PC-9 (cell line): ENCODE measurements at regions of chr5 and their contacts with region 1.

Region 1: GRCh38 chr5:139381837-139382361 is 1.2 kb downstream of the SLC23A1 start:
- DNase-seq: no peak
- H3K4me3 ChIP-seq: no peak overlapping the region
- H3K27ac ChIP-seq: no peak overlapping the region
- H3K4me1 ChIP-seq: peaks cover 49% of the 10 kb centered on the region
- H3K27me3 ChIP-seq: no peaks in the 10 kb centered on the region
- CTCF ChIP-seq: no peak

Region 2: DNA sequence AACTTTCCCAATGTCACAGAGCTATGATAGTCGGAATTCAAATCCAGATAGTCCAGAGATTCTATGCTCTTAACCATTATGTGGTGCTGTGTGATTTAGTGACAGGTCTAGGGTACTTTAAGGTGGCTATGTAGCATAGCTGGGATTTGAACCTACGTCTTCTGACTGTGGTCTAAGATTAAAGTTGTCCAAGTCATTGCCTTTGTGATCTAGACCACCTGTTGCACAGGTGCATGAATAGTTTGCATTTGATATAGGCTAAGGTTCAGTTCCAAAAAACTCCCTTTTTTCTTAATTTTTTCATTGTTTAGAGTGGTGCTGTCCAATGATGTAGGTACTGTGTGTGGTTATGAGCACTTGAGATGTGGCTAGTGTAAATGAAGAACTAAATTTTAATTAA is 37.7 kb before region 1 on chr5:
- CTCF ChIA-PET with region 1: no interaction called
- POLR2A ChIA-PET with region 1: no interaction called
- intact Hi-C with region 1: no loop called
- DNase-seq: no peak
- H3K4me3 ChIP-seq: no peak overlapping the region
- H3K27ac ChIP-seq: no peak overlapping the region
- H3K4me1 ChIP-seq: peaks cover 23% of the 10 kb centered on the region
- H3K27me3 ChIP-seq: no peaks in the 10 kb centered on the region
- CTCF ChIP-seq: no peak

Region 3: GRCh38 chr5:139392678-139393496 is 11.0 kb after region 1 on chr5:
- CTCF ChIA-PET with region 1: interaction called, 12 read pairs
- POLR2A ChIA-PET with region 1: no interaction called
- intact Hi-C with region 1: no loop called
- DNase-seq: peak in 1 of 2 experiments; percentile 52
- H3K4me3 ChIP-seq: peak overlapping the region; percentile 52; the same call in 1 of the 2 replicates
- H3K27ac ChIP-seq: no peak overlapping the region
- H3K4me1 ChIP-seq: peaks cover 36% of the 10 kb centered on the region
- H3K27me3 ChIP-seq: no peaks in the 10 kb centered on the region
- CTCF ChIP-seq: peak; percentile 40; the same call in 1 of the 2 replicates